Motor neuron (in vitro differentiated cells): ENCODE measurements at regions of chrX and their contacts with region 1.

Region 1: GRCh38 chrX:135463937-135464336 is 42.2 kb downstream of the SMIM10L2A start:
- ATAC-seq: peak in 2 of 8 experiments; percentile 25 to 43
- H3K4me3 ChIP-seq: no peak overlapping the region
- H3K27ac ChIP-seq: no peak overlapping the region
- H3K4me1 ChIP-seq: no peaks in the 10 kb centered on the region

Region 2: GRCh38 chrX:135354288-135354687 is 109.6 kb before region 1 on chrX:
- in situ Hi-C with region 1: loop called in 1 of 9 experiments (anchors 25 kb)
- ATAC-seq: no peak
- H3K4me3 ChIP-seq: no peak overlapping the region
- H3K27ac ChIP-seq: no peak overlapping the region
- H3K4me1 ChIP-seq: no peaks in the 10 kb centered on the region